PC-3 (cell line): ENCODE measurements at regions of chr17 and their contacts with region 1.

Region 1: DNA sequence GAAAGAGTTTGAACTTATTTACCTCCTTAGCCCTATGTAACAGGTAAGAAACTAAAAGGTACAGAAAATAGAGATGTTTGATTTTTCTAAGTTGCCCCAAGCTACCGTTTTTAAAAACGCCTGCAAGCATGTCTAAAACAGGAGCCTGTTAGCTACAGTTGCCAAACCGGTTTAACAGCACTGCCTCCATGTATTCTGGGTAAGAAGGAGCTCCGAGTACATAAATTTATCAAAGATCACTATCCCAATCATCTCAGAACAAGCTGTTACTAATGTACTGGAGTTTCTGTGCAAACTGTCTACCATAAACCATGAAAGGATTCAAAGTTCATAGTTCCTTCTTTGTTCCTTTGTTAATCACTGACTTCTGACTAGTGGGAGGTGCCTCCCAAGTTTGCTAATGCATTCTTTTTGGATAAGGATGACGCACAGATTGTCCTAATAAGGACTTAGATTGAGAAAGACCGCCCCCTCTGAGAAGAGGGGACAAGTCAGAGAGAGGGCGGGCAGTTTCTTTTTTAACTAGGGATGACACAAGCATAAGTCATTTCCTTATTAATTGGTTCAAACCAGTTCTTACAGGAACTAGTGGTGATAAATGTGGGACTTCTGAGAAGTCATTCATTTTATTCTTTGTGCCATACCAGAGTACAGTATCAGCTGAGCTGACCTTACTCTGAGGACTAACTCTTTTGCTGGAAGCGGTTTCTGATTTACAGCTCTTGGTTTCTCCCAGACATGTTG is 55.3 kb downstream of the TUBD1 start:
- DNase-seq: peak; percentile 100
- ATAC-seq: peak; percentile 75
- H3K4me3 ChIP-seq: peak overlapping the region; percentile 88
- H3K27ac ChIP-seq: peak overlapping the region; percentile 95
- H3K4me1 ChIP-seq: peaks cover 21% of the 10 kb centered on the region
- H3K27me3 ChIP-seq: no peaks in the 10 kb centered on the region
- CTCF ChIP-seq: no peak

Region 2: GRCh38 chr17:59707114-59707970 is 130.1 kb before region 1 on chr17 and contains the starts of genes PTRH2 and VMP1:
- CTCF ChIA-PET with region 1: no interaction called
- POLR2A ChIA-PET with region 1: interaction called, 12 read pairs
- intact Hi-C with region 1: no loop called
- DNase-seq: peak; percentile 100
- ATAC-seq: peak; percentile 96
- H3K4me3 ChIP-seq: peak within 1 kb of the TSS; percentile 76
- H3K27ac ChIP-seq: peak within 1 kb of the TSS; percentile 83
- H3K4me1 ChIP-seq: peaks cover 27% of the 10 kb centered on the region
- H3K27me3 ChIP-seq: no peaks in the 10 kb centered on the region
- CTCF ChIP-seq: no peak
- total RNA-seq, gene PTRH2: 69.8 and 82.1 TPM in 2 replicates
- total RNA-seq, gene VMP1: 237 and 277 TPM in 2 replicates

Region 3: GRCh38 chr17:59753522-59754467 is 83.7 kb before region 1 on chr17:
- CTCF ChIA-PET with region 1: interaction called, 6 read pairs
- POLR2A ChIA-PET with region 1: interaction called, 110 read pairs
- intact Hi-C with region 1: loop called (anchors 1 kb)
- DNase-seq: peak; percentile 97
- ATAC-seq: peak; percentile 65
- H3K4me3 ChIP-seq: peak overlapping the region; percentile 48
- H3K27ac ChIP-seq: peak overlapping the region; percentile 95
- H3K4me1 ChIP-seq: peaks cover 43% of the 10 kb centered on the region
- H3K27me3 ChIP-seq: no peaks in the 10 kb centered on the region
- CTCF ChIP-seq: peak; percentile 94

Region 4: DNA sequence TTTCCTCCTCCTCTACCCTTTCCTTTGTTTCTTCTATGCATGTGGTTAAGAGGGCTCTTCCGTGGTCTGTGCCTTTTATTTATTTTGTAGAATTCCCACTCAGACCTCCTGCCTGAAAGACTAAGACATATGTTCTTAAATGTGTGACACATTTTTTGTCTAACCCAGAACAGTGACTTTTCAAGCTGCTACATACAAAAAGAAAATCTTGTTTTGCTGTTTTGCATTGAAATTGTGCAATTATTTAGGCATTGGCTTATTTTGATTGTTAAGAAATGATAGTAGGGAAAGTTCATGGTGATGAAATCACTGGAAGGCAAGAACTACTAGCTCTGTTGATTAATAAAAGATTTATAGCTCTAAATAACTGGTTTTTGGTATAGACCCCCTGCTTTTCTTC is 21.5 kb before region 1 on chr17:
- CTCF ChIA-PET with region 1: no interaction called
- POLR2A ChIA-PET with region 1: interaction called, 30 read pairs
- intact Hi-C with region 1: no loop called
- DNase-seq: no peak
- ATAC-seq: no peak
- H3K4me3 ChIP-seq: no peak overlapping the region
- H3K27ac ChIP-seq: no peak overlapping the region
- H3K4me1 ChIP-seq: peaks cover 5% of the 10 kb centered on the region; the same call in 1 of the 2 replicates
- H3K27me3 ChIP-seq: no peaks in the 10 kb centered on the region
- CTCF ChIP-seq: no peak

Region 5: GRCh38 chr17:59859444-59860025 is 22.1 kb after region 1 on chr17:
- CTCF ChIA-PET with region 1: interaction called, 16 read pairs
- POLR2A ChIA-PET with region 1: interaction called, 22 read pairs
- intact Hi-C with region 1: no loop called
- DNase-seq: peak; percentile 85
- ATAC-seq: peak; percentile 47
- H3K4me3 ChIP-seq: no peak overlapping the region
- H3K27ac ChIP-seq: peak overlapping the region; percentile 92
- H3K4me1 ChIP-seq: peaks cover 43% of the 10 kb centered on the region
- H3K27me3 ChIP-seq: no peaks in the 10 kb centered on the region
- CTCF ChIP-seq: peak; percentile 94